PC-9 (cell line): ENCODE measurements at regions of chr1 and their contacts with region 1.

Region 1: GRCh38 chr1:145918144-145918992 is at the start of gene PEX11B:
- DNase-seq: peak; percentile 66 to 83
- H3K4me3 ChIP-seq: peak within 1 kb of the TSS; percentile 80
- H3K27ac ChIP-seq: peak within 1 kb of the TSS; percentile 64
- H3K4me1 ChIP-seq: peaks cover 11% of the 10 kb centered on the region
- H3K27me3 ChIP-seq: no peaks in the 10 kb centered on the region
- CTCF ChIP-seq: no peak
- total RNA-seq, gene PEX11B: 19.7 and 19.8 TPM in 2 replicates

Region 2: DNA sequence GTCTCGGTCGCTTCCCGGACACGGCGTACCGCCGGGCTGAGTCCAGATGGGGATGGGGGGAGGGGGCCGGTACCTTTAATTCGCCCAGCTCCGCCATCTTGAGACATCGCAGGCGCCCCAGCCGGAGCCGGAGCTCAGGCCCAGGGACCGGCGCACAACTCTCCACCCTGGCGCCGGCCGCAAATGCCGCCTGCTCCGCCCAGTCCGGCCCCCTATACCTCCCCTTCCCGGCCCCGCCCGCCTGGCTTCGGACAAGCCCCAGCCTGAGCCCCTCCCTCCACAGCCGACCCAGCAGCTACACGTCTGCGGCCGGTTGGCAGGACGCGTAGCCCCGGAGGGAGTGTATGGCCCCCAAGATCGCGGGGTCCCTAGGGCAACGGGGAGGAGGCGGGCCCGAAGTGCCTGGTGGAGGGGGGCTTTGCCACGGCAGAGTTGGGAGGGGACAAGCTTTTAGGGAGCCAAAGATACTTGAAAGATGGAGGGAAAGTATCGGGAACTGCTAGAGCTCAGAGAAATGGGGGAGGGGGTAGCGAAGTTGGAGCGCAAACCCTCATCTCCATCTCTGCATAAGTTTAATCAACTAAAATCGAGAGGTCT is 59.4 kb before region 1 on chr1 and contains the start of gene PIAS3:
- CTCF ChIA-PET with region 1: interaction called, 6 read pairs
- POLR2A ChIA-PET with region 1: interaction called, 6 read pairs
- intact Hi-C with region 1: loop called (anchors 2 kb)
- DNase-seq: peak; percentile 81 to 95
- H3K4me3 ChIP-seq: peak within 1 kb of the TSS; percentile 93
- H3K27ac ChIP-seq: peak within 1 kb of the TSS; percentile 23; the same call in 1 of the 2 replicates
- H3K4me1 ChIP-seq: peaks cover 8% of the 10 kb centered on the region
- H3K27me3 ChIP-seq: no peaks in the 10 kb centered on the region
- CTCF ChIP-seq: no peak
- total RNA-seq, gene PIAS3: 44.3 and 57.8 TPM in 2 replicates

Region 3: GRCh38 chr1:145879775-145880174 is 38.6 kb before region 1 on chr1:
- CTCF ChIA-PET with region 1: no interaction called
- POLR2A ChIA-PET with region 1: no interaction called
- intact Hi-C with region 1: no loop called
- DNase-seq: no peak
- H3K4me3 ChIP-seq: no peak overlapping the region
- H3K27ac ChIP-seq: no peak overlapping the region
- H3K4me1 ChIP-seq: peaks cover 41% of the 10 kb centered on the region
- H3K27me3 ChIP-seq: no peaks in the 10 kb centered on the region
- CTCF ChIP-seq: no peak

Region 4: GRCh38 chr1:146012737-146013403 is 94.5 kb after region 1 on chr1:
- CTCF ChIA-PET with region 1: interaction called, 4 read pairs
- POLR2A ChIA-PET with region 1: no interaction called
- intact Hi-C with region 1: loop called (anchors 5 kb)
- DNase-seq: peak; percentile 43 to 80
- H3K4me3 ChIP-seq: no peak overlapping the region
- H3K27ac ChIP-seq: no peak overlapping the region
- H3K4me1 ChIP-seq: no peaks in the 10 kb centered on the region; the same call in 1 of the 2 replicates
- H3K27me3 ChIP-seq: no peaks in the 10 kb centered on the region
- CTCF ChIP-seq: peak; percentile 82

Region 5: GRCh38 chr1:146039846-146040199 is 121.5 kb after region 1 on chr1:
- CTCF ChIA-PET with region 1: no interaction called
- POLR2A ChIA-PET with region 1: no interaction called
- intact Hi-C with region 1: no loop called
- DNase-seq: no peak
- H3K4me3 ChIP-seq: peak overlapping the region; percentile 74; the same call in 1 of the 2 replicates
- H3K27ac ChIP-seq: no peak overlapping the region
- H3K4me1 ChIP-seq: no peaks in the 10 kb centered on the region
- H3K27me3 ChIP-seq: no peaks in the 10 kb centered on the region
- CTCF ChIP-seq: no peak